PC-3 (cell line): ENCODE measurements at regions of chr9 and their contacts with region 1.

Region 1: GRCh38 chr9:83965350-83966208 is 14.4 kb downstream of the HNRNPK start:
- DNase-seq: no peak
- ATAC-seq: 0 out of 2 replicates have a peak, but pooled peaks have one; percentile 3
- H3K4me3 ChIP-seq: no peak overlapping the region
- H3K27ac ChIP-seq: no peak overlapping the region
- H3K4me1 ChIP-seq: peaks cover 5% of the 10 kb centered on the region
- H3K27me3 ChIP-seq: no peaks in the 10 kb centered on the region
- CTCF ChIP-seq: no peak

Region 2: GRCh38 chr9:83622939-83623678 is 342.5 kb before region 1 on chr9 and contains the start of gene IDNK:
- CTCF ChIA-PET with region 1: no interaction called
- POLR2A ChIA-PET with region 1: no interaction called
- intact Hi-C with region 1: no loop called
- DNase-seq: peak; percentile 54
- ATAC-seq: peak; percentile 72
- H3K4me3 ChIP-seq: peak within 1 kb of the TSS; percentile 85
- H3K27ac ChIP-seq: peak within 1 kb of the TSS; percentile 34
- H3K4me1 ChIP-seq: peaks cover 9% of the 10 kb centered on the region; the same call in 1 of the 2 replicates
- H3K27me3 ChIP-seq: no peaks in the 10 kb centered on the region
- CTCF ChIP-seq: no peak
- total RNA-seq, gene IDNK: 1.4 and 2.8 TPM in 2 replicates

Region 3: GRCh38 chr9:83980395-83981125 is 15.0 kb after region 1 on chr9 and contains the start of gene RMI1:
- CTCF ChIA-PET with region 1: no interaction called
- POLR2A ChIA-PET with region 1: interaction called, 3 read pairs
- intact Hi-C with region 1: loop called (anchors 2 kb)
- DNase-seq: peak; percentile 95
- ATAC-seq: peak; percentile 75
- H3K4me3 ChIP-seq: peak within 1 kb of the TSS; percentile 94
- H3K27ac ChIP-seq: peak within 1 kb of the TSS; percentile 94
- H3K4me1 ChIP-seq: peaks cover 21% of the 10 kb centered on the region
- H3K27me3 ChIP-seq: no peaks in the 10 kb centered on the region
- CTCF ChIP-seq: no peak; the same call in 1 of the 2 replicates
- total RNA-seq, gene RMI1: 5.0 and 6.2 TPM in 2 replicates

Region 4: DNA sequence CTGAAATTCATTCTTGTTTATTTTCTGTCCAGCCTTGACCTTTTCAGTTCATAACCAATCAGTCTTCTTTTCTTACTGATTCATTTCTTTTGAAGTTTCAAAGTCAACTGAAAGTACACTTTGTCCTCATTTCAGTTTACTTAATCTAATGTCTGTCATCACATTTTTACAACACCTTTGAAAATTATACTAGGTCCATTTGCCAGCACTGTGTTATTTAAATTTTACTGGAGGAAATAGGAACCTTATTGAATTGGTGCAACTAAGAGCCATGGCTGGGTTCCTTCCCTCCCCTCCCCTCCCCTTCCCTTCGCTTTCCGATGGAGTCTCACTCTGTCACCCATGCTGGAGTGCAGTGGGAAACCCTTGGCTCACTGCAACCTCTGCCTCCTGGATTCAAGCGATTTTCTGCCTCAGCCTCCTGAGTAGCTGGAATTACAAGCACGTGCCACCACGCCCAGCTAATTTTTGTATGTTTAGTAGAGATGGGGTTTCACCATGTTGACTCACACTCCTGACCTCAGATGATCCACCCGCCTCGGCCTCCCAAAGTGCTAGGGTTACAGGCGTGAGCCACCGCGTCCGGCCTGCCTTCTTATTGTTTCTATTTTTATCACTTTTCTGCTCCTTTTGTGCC is 21.3 kb after region 1 on chr9:
- CTCF ChIA-PET with region 1: no interaction called
- POLR2A ChIA-PET with region 1: interaction called, 13 read pairs
- intact Hi-C with region 1: no loop called
- DNase-seq: peak; percentile 58
- ATAC-seq: peak; percentile 86
- H3K4me3 ChIP-seq: no peak overlapping the region
- H3K27ac ChIP-seq: peak overlapping the region; percentile 31
- H3K4me1 ChIP-seq: peaks cover 26% of the 10 kb centered on the region
- H3K27me3 ChIP-seq: no peaks in the 10 kb centered on the region
- CTCF ChIP-seq: no peak